ENCODE measurements at regions of chr19 and their contacts with region 1.

Region 1: DNA sequence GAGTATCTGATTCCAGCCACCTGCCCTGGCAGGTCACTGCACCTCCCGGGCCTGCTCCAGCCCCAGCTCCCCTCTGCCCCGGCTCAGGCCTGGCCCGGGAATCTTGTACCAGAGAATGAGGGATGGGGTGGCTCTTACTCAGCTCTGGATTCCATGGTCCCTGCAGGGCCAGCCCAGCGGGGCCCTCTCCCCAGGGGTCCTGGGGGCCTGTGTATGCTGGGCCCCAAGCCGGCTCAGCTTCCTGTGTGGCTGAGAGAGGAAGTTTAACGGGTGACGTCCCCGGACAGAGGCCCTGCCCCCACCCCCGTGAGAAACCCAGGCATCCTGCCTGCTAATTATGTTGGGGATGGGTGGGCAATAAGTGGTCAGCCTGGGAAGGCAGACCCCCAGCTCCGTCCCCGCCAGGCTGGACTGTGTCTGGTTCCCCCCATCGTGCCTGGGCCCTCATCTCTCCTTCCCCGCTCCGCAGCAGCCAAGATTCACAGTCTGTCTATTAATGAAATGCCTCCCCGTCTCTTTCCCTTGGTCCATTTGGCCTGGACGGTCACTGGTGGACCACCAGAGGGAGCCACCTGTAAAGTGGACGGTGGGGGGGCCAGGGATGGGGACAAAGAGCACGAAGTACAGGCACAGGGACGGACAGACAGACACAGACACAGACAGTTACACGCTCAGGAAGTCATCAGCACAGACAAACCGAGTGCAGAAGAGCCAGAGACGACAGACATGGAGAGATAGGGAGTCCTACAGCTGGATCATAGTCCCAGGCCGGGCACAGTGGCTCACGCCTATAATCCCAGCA is at the start of gene DENND1C:
- DNase-seq: peak; percentile 83
- H3K4me3 Mint-ChIP-seq: peak within 1 kb of the TSS; percentile 98
- H3K27ac Mint-ChIP-seq: peak within 1 kb of the TSS; percentile 95
- H3K4me1 Mint-ChIP-seq: peaks cover 39% of the 10 kb centered on the region
- H3K27me3 Mint-ChIP-seq: no peaks in the 10 kb centered on the region
- total RNA-seq, gene DENND1C: 97.2 to 101 TPM

Region 2: DNA sequence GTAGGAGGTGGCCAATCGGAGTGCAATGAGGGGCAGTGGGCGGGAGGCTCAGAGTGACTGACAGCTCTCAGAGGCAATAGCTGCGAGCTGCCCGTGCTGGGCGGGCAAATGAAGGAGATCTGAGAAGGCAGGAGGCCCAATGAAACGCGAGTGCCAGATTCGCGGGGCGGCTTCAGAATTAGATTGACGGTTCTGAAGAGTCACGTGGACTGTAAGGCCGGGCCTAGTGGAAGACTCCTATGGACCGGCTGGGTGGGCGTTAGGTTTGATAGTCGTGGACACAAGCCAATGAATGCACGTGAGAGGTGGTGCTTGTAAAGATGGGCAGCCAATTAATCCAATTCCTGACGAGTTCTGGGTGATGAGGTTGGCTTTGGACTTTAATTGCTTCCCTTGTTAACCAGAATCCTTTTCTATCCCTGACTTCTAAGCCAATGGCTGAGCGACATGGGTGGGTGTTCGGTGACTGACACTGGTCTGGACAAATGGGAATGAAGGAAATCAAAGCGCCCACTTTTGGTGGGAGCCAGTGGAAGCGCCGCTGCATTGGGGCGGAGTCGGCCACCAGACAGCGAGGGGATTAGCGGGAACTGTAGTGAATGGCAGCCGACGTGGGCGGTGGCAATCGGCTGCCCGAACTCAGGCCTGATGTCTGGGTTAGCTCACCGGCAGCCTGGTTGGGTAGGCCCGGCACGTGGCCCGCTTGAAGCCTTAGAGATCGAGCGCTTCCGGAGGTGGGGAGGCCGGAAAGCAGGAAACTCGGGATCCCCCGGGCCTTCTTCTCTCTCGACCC is 56.6 kb before region 1 on chr19:
- CTCF ChIA-PET with region 1: no interaction called
- POLR2A ChIA-PET with region 1: interaction called, 18 read pairs
- DNase-seq: peak; percentile 100
- H3K4me3 Mint-ChIP-seq: peak overlapping the region; percentile 71
- H3K27ac Mint-ChIP-seq: peak overlapping the region; percentile 80
- H3K4me1 Mint-ChIP-seq: peaks cover 40% of the 10 kb centered on the region
- H3K27me3 Mint-ChIP-seq: no peaks in the 10 kb centered on the region

Region 3: DNA sequence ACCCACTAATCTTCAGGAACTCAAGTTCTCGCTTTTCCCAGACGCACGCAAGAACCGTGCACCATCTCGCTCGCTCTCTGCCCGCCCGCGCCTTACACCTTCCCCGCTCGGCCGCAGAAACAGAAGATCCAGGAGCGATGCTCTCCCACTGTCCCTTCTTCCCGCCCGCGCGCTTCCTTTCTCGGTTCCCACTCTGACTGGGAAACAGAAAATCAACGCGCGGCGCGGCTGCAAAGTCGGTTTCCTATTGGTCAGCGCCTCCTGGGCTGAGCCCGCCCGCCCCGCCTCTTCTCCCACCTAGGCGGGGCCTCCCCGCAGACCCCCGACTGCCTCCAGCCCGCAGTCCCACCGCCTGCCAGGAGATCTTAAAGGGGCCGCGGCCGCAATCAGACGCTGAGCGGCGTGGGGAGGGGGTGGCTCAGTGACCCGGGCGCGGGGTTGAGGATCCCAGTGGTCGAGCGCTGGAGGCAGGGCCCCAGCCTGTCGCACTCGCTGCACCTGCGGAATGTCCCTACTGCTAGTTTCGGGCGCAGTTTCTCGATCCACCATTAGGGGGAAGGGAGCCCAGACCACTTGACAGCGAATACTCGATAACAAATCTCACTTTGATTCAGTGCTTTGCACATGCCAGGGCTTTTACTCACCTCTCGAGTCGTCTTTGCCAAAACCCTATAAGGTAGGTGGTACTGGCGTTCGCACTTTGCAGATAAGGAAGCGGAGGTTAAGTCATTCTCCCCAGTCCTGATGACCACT is 21.5 kb before region 1 on chr19:
- CTCF ChIA-PET with region 1: interaction called, 3 read pairs
- POLR2A ChIA-PET with region 1: interaction called, 19 read pairs
- DNase-seq: peak; percentile 97
- H3K4me3 Mint-ChIP-seq: peak overlapping the region; percentile 83
- H3K27ac Mint-ChIP-seq: peak overlapping the region; percentile 78
- H3K4me1 Mint-ChIP-seq: peaks cover 19% of the 10 kb centered on the region
- H3K27me3 Mint-ChIP-seq: no peaks in the 10 kb centered on the region

Region 4: GRCh38 chr19:6466526-6467248 is 15.1 kb before region 1 on chr19:
- CTCF ChIA-PET with region 1: interaction called, 8 read pairs
- POLR2A ChIA-PET with region 1: interaction called, 17 read pairs
- DNase-seq: no peak
- H3K4me3 Mint-ChIP-seq: no peak overlapping the region
- H3K27ac Mint-ChIP-seq: no peak overlapping the region
- H3K4me1 Mint-ChIP-seq: peaks cover 3% of the 10 kb centered on the region
- H3K27me3 Mint-ChIP-seq: no peaks in the 10 kb centered on the region

Region 5: GRCh38 chr19:6498321-6499036 is 16.7 kb after region 1 on chr19:
- CTCF ChIA-PET with region 1: interaction called, 4 read pairs
- POLR2A ChIA-PET with region 1: interaction called, 23 read pairs
- DNase-seq: no peak
- H3K4me3 Mint-ChIP-seq: no peak overlapping the region
- H3K27ac Mint-ChIP-seq: no peak overlapping the region
- H3K4me1 Mint-ChIP-seq: peaks cover 21% of the 10 kb centered on the region
- H3K27me3 Mint-ChIP-seq: peaks cover 12% of the 10 kb centered on the region

Region 6: GRCh38 chr19:6503407-6504201 is 21.9 kb after region 1 on chr19:
- CTCF ChIA-PET with region 1: interaction called, 12 read pairs
- POLR2A ChIA-PET with region 1: interaction called, 23 read pairs
- DNase-seq: no peak
- H3K4me3 Mint-ChIP-seq: no peak overlapping the region
- H3K27ac Mint-ChIP-seq: no peak overlapping the region
- H3K4me1 Mint-ChIP-seq: peaks cover 28% of the 10 kb centered on the region
- H3K27me3 Mint-ChIP-seq: peaks cover 15% of the 10 kb centered on the region

Region 7: GRCh38 chr19:6516659-6517291 is 35.0 kb after region 1 on chr19:
- CTCF ChIA-PET with region 1: interaction called, 11 read pairs
- POLR2A ChIA-PET with region 1: interaction called, 12 read pairs
- DNase-seq: peak; percentile 93
- H3K4me3 Mint-ChIP-seq: peak overlapping the region; percentile 98
- H3K27ac Mint-ChIP-seq: peak overlapping the region; percentile 88
- H3K4me1 Mint-ChIP-seq: peaks cover 42% of the 10 kb centered on the region
- H3K27me3 Mint-ChIP-seq: no peaks in the 10 kb centered on the region

Measured in activated CD4-positive, alpha-beta memory T cell treated with anti-CD3 and anti-CD28 coated beads, Interleukin-2, amount 10 ng/mL, durations not matched to agents 7 days and 5 days (primary cell).